Left cardiac atrium (tissue), 4 donors: ENCODE measurements at regions of chrX and their contacts with region 1.

Region 1: DNA sequence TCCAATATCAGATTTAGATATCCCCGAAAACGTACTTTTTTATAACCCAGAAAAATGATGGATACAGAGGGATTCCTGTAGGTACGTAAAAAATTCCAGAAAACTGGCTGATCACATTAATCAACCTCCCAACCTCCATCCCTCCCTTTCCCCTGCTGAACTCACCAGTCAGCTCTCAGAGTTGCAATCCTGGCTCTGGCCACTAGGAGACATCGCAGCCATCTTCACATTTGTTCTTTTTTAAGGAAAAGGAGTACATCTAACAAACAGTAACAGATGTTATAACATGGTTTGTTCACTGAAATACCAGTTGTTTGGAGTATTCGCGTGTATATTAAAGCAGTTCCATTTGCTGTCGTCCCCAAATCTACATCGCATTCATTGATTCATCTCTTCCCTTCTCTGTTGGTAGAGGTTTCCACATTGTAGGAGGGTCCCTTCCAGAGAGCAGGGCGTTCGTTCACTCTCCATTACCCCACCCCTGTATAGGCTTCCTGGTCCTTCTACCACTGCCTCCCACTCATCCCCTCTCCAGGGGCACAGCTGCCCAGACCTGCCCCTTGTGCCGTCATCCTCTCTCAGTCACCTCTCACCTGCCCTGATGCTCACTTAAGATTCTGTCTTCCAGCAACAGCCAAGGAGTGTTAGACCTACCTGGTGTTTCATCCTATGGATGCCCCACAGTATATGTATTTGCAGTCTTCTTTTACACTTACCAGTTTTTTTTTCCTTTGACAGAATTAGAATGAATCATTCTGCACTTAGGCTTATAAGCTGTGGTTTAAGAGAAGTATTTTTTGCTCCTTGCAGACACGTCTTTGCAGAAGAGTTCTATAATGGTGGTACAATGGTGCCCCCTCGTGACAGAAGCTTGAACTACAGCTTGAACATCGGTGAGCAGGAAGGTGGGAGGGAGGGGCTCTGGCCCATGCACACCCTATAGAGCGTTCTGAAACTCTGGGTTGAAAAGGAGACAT is 36.8 kb upstream of the RAB40AL start:
- DNase-seq: peak; percentile 53
- ATAC-seq: peak; percentile 66 to 78

Region 2: GRCh38 chrX:102643275-102643674 is 257.0 kb before region 1 on chrX:
- intact Hi-C with region 1: no loop called
- DNase-seq: no peak
- ATAC-seq: no peak

Region 3: DNA sequence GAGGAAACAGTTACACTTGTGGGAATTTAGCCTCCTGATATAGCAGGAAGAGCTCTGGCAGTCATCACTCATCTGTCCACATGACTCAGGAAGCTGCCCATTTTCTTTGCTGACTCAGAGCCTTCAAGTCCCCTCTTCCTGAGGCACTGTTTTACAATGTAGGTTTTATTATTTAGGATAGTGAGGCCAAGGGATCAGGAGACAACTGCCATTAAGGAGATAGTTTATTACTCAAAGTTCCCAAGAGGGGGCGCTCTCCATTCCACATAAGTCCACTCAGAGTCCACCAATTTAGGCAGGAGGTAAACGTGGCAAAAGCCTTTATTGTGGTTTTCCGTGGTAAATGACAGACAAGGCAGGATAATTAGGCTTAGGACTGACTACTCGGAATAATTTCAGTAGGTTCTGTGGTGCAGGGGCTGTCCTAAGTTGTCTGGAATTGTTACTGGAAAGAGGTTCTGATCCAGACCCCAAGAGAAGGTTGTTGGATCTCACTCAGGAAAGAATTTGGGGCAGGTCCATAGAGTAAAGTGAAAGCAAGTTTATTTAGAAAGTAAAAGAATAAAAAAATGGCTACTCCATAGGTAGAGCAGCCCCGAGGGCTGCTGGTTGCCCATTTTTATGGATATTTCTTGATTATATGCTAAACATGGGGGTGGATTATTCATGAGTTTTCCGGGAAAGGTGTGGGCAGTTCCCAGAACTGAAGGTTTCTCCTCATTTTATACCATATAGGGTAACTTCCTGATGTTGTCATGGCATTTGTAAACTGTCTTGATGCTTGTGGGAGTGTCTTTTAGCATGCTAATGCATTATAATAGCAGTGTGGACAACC is 59.1 kb before region 1 on chrX:
- intact Hi-C with region 1: loop called in 1 of 2 experiments (anchors 10 kb)
- DNase-seq: no peak
- ATAC-seq: no peak

Region 4: DNA sequence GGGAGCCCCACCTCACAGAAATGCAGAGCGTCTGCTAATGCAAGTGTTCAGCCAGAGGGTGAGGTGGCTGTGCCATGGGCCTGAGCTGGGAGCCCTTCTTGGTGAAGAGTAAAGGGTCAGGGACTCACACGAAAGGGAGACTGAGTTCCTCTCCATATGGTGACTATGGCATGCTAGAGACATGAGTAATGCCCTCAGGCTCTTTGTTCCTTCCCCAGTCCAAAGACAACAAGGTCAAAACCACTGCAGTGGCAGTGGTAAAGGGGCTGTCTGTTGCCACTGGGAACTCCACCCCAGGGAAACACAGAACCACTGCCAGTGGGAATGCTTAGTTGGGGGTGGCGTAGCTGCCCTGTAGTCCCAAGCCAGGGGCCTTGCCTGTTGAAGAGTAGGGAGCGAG is 59.2 kb after region 1 on chrX:
- intact Hi-C with region 1: no loop called
- DNase-seq: no peak
- ATAC-seq: no peak

Region 5: DNA sequence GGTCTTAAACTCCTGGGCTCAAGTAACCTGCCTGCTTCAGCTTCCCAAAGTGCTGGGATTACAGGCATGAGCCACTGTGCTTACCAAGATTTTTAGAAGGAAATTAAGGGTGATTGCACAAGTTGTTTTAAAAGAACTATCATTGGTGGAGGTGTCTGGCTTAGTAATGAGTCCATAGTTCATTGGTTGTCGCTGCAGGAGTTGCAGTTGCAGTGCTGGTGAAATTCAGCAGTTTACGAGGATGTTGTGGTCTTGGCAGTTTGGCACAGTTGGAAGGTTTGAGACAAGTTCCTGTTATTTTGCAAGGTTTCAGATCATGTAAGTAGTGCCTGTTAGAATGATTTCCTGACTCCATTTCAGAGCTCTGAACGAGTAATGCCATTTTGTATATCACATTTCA is 85.0 kb after region 1 on chrX:
- intact Hi-C with region 1: no loop called
- DNase-seq: no peak
- ATAC-seq: peak in 1 of 2 donors; percentile 33

Region 6: GRCh38 chrX:103017542-103017941 is 117.3 kb after region 1 on chrX:
- intact Hi-C with region 1: no loop called
- DNase-seq: no peak
- ATAC-seq: no peak